BJ (cell line): ENCODE measurements at regions of chr11 and their contacts with region 1.

Region 1: DNA sequence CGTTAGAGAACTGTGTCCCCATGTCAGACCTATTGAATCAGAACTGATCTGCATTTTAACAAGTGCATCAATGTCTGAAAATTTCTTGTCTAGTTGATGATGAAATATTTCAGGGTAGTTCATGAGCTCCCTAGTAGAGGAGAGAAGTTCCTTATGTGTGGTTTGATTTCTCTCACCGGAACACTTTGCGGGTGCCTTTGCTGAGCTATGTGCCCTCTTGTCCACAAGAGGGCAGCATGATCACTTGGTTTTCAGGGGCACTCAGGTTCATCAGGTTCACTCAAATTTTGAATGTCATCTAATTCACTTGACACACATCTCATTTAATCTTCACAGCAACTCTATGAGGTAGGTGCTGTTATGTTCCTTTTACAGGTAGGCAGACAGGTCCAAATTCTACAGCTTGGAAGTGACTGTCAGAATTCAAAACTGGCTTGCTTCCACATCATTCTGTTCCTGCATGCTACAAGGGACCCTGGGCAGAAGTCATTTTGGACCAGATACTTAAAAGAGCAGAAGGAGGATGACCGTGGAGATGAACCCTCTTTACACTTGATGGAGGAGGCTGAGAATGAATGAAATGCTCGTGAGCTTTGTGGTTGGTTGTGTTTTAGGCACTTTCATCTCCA is 55.6 kb downstream of the P4HA3 start:
- DNase-seq: no peak
- H3K4me3 ChIP-seq: no peak overlapping the region
- H3K27me3 ChIP-seq: no peaks in the 10 kb centered on the region
- CTCF ChIP-seq: peak; percentile 90

Region 2: DNA sequence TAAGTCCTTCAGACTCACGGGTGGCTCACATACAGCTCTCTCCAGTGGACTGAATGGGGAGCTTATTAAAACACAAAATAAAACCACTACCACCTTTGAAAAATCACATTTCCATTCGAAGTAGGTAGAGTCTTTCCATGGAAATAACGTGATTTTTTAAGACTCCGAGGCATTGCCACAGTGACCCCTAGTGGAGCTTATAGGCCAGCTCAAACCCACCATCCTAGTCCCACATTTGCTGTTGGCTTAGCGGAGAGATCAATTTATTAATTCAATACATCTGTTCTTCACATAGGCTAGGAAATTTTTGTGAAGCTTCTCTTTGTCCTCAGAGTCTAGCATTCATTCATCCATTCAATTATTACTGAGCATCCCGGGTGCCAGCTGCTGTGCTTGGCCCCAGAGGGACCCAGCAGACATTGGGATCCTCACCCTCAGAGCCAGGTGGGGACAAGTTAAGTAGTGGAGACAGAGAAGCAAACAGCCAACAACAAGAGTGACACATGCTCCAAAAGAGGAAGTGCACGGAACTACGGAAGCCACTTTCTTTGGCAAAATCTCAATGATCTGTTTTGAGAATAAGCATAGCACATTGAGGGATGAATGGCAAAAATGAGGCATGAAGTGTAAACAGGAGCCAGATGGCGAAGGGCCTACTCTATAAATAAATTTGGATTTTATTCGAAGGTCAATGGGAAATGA is 65.8 kb after region 1 on chr11:
- CTCF ChIA-PET with region 1: interaction called, 22 read pairs
- POLR2A ChIA-PET with region 1: no interaction called
- DNase-seq: peak; percentile 32
- H3K4me3 ChIP-seq: no peak overlapping the region
- H3K27me3 ChIP-seq: no peaks in the 10 kb centered on the region
- CTCF ChIP-seq: peak; percentile 57

Region 3: DNA sequence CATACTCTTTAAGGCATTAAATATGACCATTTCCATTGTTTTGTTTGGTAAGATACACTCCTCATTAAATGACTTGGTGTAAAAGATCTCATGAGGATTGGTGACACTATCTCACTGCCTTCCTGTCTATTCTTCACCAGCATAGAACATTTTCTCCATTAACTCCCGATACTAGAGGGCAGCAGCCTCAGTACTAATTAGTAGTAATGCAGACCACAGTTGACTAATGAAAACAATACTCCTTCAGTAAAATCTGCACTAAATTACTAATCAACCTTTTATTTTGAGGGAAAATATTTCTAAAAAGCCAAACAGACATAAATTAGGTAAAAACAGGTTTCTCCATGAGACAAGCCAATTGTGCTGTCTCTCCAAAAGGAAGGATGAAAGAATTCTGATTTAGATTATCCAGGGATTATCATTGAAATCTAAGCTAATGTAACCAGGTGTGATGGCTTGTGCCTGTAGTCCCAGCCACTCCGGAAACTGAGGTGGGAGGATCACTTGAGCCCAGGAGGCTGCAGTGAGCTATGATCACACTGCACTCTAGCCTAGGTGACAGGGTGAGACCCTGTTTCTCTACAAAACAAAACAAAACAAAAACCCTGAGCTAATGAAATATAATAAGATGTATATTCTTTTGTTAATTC is 132.9 kb after region 1 on chr11:
- CTCF ChIA-PET with region 1: interaction called, 14 read pairs
- POLR2A ChIA-PET with region 1: no interaction called
- DNase-seq: no peak
- H3K4me3 ChIP-seq: no peak overlapping the region
- H3K27me3 ChIP-seq: no peaks in the 10 kb centered on the region
- CTCF ChIP-seq: peak; percentile 81

Region 4: GRCh38 chr11:74437441-74438042 is 181.7 kb after region 1 on chr11:
- CTCF ChIA-PET with region 1: interaction called, 300 read pairs
- POLR2A ChIA-PET with region 1: no interaction called
- DNase-seq: no peak
- H3K4me3 ChIP-seq: no peak overlapping the region
- H3K27me3 ChIP-seq: no peaks in the 10 kb centered on the region
- CTCF ChIP-seq: no peak

Region 5: GRCh38 chr11:74570266-74571061 is 314.6 kb after region 1 on chr11:
- CTCF ChIA-PET with region 1: interaction called, 17 read pairs
- POLR2A ChIA-PET with region 1: no interaction called
- DNase-seq: no peak
- H3K4me3 ChIP-seq: no peak overlapping the region
- H3K27me3 ChIP-seq: peaks cover 9% of the 10 kb centered on the region
- CTCF ChIP-seq: peak; percentile 66